CD4-positive, alpha-beta T cell (primary cell): ENCODE measurements at regions of chr9 and their contacts with region 1.

Region 1: DNA sequence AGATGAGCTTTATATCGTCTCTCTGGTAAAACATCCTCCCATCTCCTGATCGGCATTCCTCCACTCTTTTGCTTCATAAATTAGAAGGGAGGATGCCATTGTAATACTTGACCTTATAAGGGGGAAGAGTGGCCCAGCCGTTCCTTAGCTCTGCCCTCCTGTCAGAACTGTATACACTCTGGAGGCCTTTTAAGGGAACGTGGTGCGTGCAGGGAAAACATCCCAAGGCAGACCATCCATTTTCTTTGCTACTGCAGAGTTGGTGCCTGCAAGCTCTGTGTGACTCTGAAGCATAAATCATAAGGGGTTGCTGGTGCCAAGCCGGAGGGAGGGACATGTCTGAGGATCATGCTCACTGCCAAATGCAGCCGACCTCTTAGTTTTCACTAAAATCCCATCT is 90.4 kb downstream of the PGM5 start:
- DNase-seq: no peak
- ATAC-seq: no peak
- H3K4me3 ChIP-seq: no peak overlapping the region
- H3K4me3 Mint-ChIP-seq: no peak overlapping the region
- H3K27ac ChIP-seq: no peak overlapping the region
- H3K27ac Mint-ChIP-seq: no peak overlapping the region
- H3K4me1 ChIP-seq: no peaks in the 10 kb centered on the region
- H3K4me1 Mint-ChIP-seq: no peaks in the 10 kb centered on the region
- H3K27me3 ChIP-seq: no peaks in the 10 kb centered on the region
- H3K27me3 Mint-ChIP-seq: peaks cover 15% of the 10 kb centered on the region
- CTCF ChIP-seq: no peak

Region 2: DNA sequence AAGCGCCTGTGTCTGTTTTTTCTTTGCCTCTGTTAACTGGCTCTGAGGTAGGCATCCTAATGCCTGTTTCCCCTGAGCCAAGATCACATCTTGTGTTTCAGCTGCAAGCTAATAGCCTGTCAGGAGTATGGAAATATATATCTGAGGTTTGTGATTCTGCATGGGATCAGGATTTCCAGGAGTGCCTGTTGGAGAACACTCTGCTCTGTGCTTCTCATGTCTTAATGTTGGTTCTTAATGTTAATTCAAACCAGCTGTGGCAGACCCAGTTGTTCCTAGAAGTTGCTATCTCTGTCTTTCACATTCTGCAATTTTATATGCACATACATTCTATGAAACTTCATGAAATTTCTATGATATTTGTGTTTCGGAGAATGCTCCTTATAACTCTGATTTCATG is 18.4 kb before region 1 on chr9:
- CTCF ChIA-PET with region 1: no interaction called
- POLR2A ChIA-PET with region 1: no interaction called
- intact Hi-C with region 1: no loop called
- DNase-seq: no peak
- ATAC-seq: no peak
- H3K4me3 ChIP-seq: no peak overlapping the region
- H3K4me3 Mint-ChIP-seq: no peak overlapping the region
- H3K27ac ChIP-seq: no peak overlapping the region
- H3K27ac Mint-ChIP-seq: no peak overlapping the region
- H3K4me1 ChIP-seq: no peaks in the 10 kb centered on the region
- H3K4me1 Mint-ChIP-seq: no peaks in the 10 kb centered on the region
- H3K27me3 ChIP-seq: peaks cover 0 to 2% of the 10 kb centered on the region in 2 experiments
- H3K27me3 Mint-ChIP-seq: no peaks in the 10 kb centered on the region
- CTCF ChIP-seq: no peak

Region 3: GRCh38 chr9:68473790-68474189 is 27.0 kb after region 1 on chr9:
- CTCF ChIA-PET with region 1: no interaction called
- POLR2A ChIA-PET with region 1: no interaction called
- intact Hi-C with region 1: no loop called
- DNase-seq: peak in 1 of 14 experiments; percentile 1
- ATAC-seq: no peak
- H3K4me3 ChIP-seq: no peak overlapping the region
- H3K4me3 Mint-ChIP-seq: no peak overlapping the region
- H3K27ac ChIP-seq: no peak overlapping the region
- H3K27ac Mint-ChIP-seq: no peak overlapping the region
- H3K4me1 ChIP-seq: no peaks in the 10 kb centered on the region
- H3K4me1 Mint-ChIP-seq: no peaks in the 10 kb centered on the region
- H3K27me3 ChIP-seq: peaks cover 2% of the 10 kb centered on the region in 2 experiments
- H3K27me3 Mint-ChIP-seq: peaks cover 47% of the 10 kb centered on the region
- CTCF ChIP-seq: no peak

Region 4: DNA sequence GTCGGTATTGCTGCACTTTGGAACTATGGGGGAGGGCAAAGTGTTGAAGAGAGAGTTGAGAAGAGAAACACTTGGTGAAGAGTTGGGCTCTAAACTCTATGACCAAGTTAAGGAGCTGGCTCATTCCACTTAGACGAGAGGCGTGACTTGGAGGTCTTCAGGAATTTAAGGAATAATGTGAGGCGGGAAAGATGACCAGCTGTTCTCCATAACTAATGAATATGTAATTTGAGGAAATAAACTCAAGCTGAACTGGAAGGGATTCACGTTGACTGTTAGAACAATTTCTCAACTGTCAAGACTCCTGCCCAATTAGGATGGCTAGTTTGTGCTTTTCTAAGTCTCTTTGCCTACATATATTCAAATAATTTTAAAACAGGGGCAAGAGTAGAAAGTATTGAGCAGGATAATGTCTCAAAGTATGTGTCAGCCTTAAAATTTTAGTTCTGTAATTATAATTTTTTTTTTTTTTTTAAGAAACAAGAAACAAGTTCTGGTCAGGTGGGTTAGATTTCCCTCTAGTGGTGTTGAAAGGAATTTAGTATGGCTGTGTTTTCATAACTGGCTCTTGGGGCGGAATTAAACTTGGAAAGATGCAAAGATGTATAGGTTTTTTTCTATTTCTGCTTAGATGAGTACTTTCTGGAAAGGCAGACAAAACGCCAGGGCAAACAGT is 60.4 kb after region 1 on chr9:
- CTCF ChIA-PET with region 1: no interaction called
- POLR2A ChIA-PET with region 1: no interaction called
- intact Hi-C with region 1: loop called in 1 of 2 experiments (anchors 10 kb)
- DNase-seq: peak in 1 of 14 experiments; percentile 11
- ATAC-seq: no peak
- H3K4me3 ChIP-seq: no peak overlapping the region
- H3K4me3 Mint-ChIP-seq: no peak overlapping the region
- H3K27ac ChIP-seq: no peak overlapping the region
- H3K27ac Mint-ChIP-seq: no peak overlapping the region
- H3K4me1 ChIP-seq: no peaks in the 10 kb centered on the region
- H3K4me1 Mint-ChIP-seq: no peaks in the 10 kb centered on the region
- H3K27me3 ChIP-seq: no peaks in the 10 kb centered on the region
- H3K27me3 Mint-ChIP-seq: peaks cover 8% of the 10 kb centered on the region
- CTCF ChIP-seq: no peak

Region 5: DNA sequence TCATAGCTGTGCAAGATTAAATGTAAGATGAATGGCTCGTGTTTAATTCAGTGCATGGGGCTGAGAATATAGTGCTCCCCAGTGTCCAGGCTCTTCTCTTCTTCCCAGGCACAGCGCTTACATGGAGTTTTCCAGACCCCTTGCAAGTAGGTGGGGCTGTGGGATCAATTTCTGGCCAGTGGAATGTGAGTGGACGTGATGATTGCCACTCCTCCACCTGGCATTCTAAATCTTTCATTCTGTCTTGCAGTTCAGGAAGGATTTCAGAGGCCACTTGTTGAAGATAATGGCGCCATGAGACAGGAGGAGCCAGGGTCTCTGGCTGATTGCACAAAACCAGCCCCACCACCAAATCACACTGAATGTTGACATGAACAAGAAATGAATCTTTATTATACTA is 251.0 kb after region 1 on chr9:
- CTCF ChIA-PET with region 1: no interaction called
- POLR2A ChIA-PET with region 1: no interaction called
- intact Hi-C with region 1: no loop called
- DNase-seq: no peak
- ATAC-seq: no peak
- H3K4me3 ChIP-seq: no peak overlapping the region
- H3K4me3 Mint-ChIP-seq: no peak overlapping the region
- H3K27ac ChIP-seq: no peak overlapping the region
- H3K27ac Mint-ChIP-seq: no peak overlapping the region
- H3K4me1 ChIP-seq: no peaks in the 10 kb centered on the region
- H3K4me1 Mint-ChIP-seq: no peaks in the 10 kb centered on the region
- H3K27me3 ChIP-seq: peaks cover 16 to 25% of the 10 kb centered on the region in 2 experiments
- H3K27me3 Mint-ChIP-seq: peaks cover 89% of the 10 kb centered on the region
- CTCF ChIP-seq: no peak